ENCODE measurements at regions of chr11 and their contacts with region 1.

Region 1: GRCh38 chr11:10808553-10809372 is at the start of gene EIF4G2:
- DNase-seq: peak; percentile 95 to 99 (median 98)
- ATAC-seq: peak; percentile 88 to 91
- H3K4me3 Mint-ChIP-seq: peak within 1 kb of the TSS; percentile 94 to 99 (median 97)
- H3K27ac Mint-ChIP-seq: peak within 1 kb of the TSS; percentile 96 to 100 (median 99)
- H3K4me1 Mint-ChIP-seq: peaks cover 22 to 52% (median 43%) of the 10 kb centered on the region in 4 donors
- H3K27me3 Mint-ChIP-seq: no peaks in the 10 kb centered on the region
- polyA plus RNA-seq, gene EIF4G2: 315 to 425 (median 340) TPM

Region 2: GRCh38 chr11:9460322-9461067 is 1348.3 kb before region 1 on chr11 and contains the start of gene ZNF143:
- POLR2A ChIA-PET with region 1: interaction called, 12 read pairs
- DNase-seq: peak; percentile 95 to 100 (median 100)
- ATAC-seq: peak; percentile 85 to 89
- H3K4me3 Mint-ChIP-seq: peak within 1 kb of the TSS; percentile 88 to 99 (median 96)
- H3K27ac Mint-ChIP-seq: peak within 1 kb of the TSS; percentile 91 to 99 (median 98)
- H3K4me1 Mint-ChIP-seq: peaks cover 9 to 34% (median 33%) of the 10 kb centered on the region in 4 donors
- H3K27me3 Mint-ChIP-seq: peaks cover 0 to 1% (median 0%) of the 10 kb centered on the region in 5 donors
- polyA plus RNA-seq, gene ZNF143: 28.1 to 38.5 (median 32.9) TPM

Region 3: GRCh38 chr11:10797531-10797930 is 11.2 kb before region 1 on chr11:
- POLR2A ChIA-PET with region 1: interaction called, 62 read pairs
- DNase-seq: no peak
- ATAC-seq: no peak
- H3K4me3 Mint-ChIP-seq: no peak overlapping the region
- H3K27ac Mint-ChIP-seq: peak overlapping the region in 5 of 10 donors; percentile 12 to 66 (median 44)
- H3K4me1 Mint-ChIP-seq: peaks cover 31 to 74% (median 65%) of the 10 kb centered on the region in 4 donors
- H3K27me3 Mint-ChIP-seq: peaks cover 0 to 7% (median 4%) of the 10 kb centered on the region in 5 donors

Region 4: DNA sequence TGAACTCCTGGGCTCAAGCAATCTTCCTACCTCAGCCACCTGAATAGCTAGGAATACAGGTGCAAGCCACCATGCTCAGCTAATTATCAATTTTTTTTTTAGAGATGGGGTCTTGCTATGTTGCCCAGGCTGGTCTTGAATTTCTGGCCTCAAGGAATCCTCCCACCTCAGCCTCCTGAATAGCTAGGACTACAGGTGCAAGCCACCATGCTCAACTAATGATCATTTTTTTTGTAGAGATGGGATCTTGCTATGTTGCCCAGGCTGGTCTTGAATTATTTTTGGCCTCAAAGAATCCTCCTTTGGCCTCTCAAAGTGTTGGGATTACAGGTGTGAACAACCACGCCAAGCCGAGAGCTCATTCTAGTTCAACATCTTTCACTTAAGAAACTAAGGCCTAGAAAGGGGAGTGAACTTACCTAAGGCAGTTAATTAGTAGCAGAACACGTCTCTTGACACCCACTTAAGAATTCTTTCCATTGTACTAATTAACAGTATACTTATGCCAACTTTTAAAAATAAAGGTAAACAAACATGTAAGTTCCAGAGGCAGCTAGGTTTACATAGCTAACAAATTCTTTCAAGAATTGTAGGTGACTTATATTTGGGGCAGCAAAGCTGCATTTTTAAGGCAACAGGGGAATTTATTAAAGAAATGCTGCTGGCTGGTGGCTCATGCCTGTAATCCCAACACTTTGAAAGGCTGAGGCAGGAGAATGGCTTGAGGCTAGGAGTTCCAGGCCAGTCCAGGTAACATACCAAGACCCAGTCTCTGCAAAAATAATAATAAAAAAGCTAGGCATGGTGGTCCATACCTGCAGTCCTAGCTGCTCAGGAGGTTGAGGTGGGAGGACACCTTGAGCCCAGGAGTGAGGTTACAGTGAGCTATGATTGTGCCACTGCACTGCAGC is 39.5 kb after region 1 on chr11:
- POLR2A ChIA-PET with region 1: interaction called, 42 read pairs
- DNase-seq: no peak
- ATAC-seq: peak in 1 of 2 donors; percentile 13
- H3K4me3 Mint-ChIP-seq: no peak overlapping the region
- H3K27ac Mint-ChIP-seq: peak overlapping the region in 8 of 10 donors; percentile 2 to 82 (median 30)
- H3K4me1 Mint-ChIP-seq: peaks cover 12 to 44% (median 28%) of the 10 kb centered on the region in 4 donors
- H3K27me3 Mint-ChIP-seq: no peaks in the 10 kb centered on the region

Region 5: GRCh38 chr11:10899121-10899830 is 90.5 kb after region 1 on chr11:
- POLR2A ChIA-PET with region 1: interaction called, 11 read pairs
- DNase-seq: no peak
- ATAC-seq: peak in 1 of 2 donors; percentile 26
- H3K4me3 Mint-ChIP-seq: peak overlapping the region in 1 of 10 donors; percentile 64
- H3K27ac Mint-ChIP-seq: peak overlapping the region in 5 of 10 donors; percentile 14 to 96 (median 29)
- H3K4me1 Mint-ChIP-seq: peaks cover 0 to 26% (median 9%) of the 10 kb centered on the region in 4 donors
- H3K27me3 Mint-ChIP-seq: peaks cover 0 to 7% (median 3%) of the 10 kb centered on the region in 5 donors

Region 6: DNA sequence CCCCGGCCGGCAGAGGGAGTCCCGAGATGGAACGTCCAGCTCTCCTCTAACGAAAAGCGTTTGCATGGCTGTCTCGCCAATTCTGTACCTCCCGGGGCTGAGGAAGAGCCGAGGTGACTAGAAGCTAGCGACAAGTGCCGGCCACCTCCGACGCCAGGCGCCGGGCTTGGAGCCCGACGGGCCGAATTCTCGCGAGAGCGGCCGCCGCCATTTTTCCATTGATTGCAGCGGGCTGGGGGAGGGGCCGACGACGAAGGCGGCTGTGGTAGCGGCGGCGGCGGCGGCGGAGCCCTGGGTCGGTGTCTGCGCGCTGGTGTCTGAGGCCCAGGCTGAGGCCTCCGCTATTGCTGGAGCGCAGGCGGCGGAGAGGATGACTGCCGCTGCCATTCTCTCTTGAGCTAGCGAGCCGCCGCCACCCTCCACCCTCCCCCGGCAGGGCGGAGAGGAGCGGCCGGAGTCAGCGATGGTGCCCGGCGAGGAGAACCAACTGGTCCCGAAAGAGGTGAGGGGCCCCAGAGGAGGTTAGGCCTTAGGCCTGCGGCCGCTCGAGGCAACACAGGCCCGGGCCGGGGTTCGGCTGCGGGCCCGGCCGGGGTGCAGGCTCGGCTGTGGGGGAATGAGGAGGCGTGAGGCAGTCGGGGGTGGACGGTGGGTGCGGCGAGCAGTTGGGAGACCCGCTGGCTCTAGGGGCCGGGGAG is 1033.1 kb after region 1 on chr11 and contains the start of gene USP47:
- POLR2A ChIA-PET with region 1: interaction called, 40 read pairs
- DNase-seq: peak; percentile 90 to 97 (median 96)
- ATAC-seq: peak; percentile 83 to 84
- H3K4me3 Mint-ChIP-seq: no peak within 1 kb of the TSS
- H3K27ac Mint-ChIP-seq: no peak within 1 kb of the TSS
- H3K4me1 Mint-ChIP-seq: peaks cover 3 to 25% (median 9%) of the 10 kb centered on the region in 4 donors
- H3K27me3 Mint-ChIP-seq: peaks cover 4 to 13% (median 7%) of the 10 kb centered on the region in 5 donors
- polyA plus RNA-seq, gene USP47: 38.2 to 54.3 (median 40.1) TPM

Measured in naive thymus-derived CD8-positive, alpha-beta T cell (primary cell).